CD4-positive, alpha-beta T cell (primary cell): ENCODE measurements at regions of chr5 and their contacts with region 1.

Region 1: DNA sequence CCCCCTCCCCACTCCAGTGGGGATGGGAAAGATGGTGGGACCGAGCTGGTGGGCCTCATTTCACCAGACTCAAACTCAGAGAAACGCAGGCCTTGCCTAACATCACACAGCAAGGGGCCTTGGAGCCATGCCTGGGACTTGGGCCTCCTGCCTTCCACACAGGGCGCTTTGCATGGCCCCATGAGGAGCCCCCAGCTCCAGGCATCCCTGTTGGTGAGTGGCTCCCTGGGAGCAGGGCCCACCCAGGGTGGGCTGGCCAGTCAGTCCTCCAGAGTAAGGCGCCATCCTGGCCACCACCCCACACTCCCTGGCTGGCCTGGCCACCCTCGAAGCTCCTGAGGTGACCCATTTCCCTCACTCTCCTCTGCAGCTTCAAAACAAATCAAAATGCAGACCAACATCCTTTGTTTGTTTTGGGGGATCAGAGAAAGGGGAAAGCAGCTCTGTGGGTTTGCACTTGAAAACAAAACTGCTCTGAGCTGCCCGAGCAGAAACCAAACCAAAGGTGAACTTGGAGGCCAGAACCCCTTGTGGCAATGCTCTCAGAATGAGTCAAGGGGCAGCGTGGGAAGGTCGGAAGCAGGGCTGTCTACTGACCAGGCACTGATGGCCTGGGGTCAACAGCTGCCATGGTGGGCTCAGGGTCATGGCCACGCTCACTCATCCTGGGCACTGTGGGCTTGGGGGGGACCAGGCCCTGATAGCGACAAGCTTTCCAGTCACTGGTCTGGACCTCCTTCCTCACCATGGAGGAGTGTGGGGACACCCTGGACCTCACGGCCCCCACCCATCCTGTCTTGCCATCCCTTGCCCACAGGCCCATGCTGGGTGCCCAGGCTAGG is 37.0 kb upstream of the VDAC1 start:
- DNase-seq: peak in 1 of 14 experiments; percentile 10
- ATAC-seq: no peak
- H3K4me3 ChIP-seq: no peak overlapping the region
- H3K4me3 Mint-ChIP-seq: peak overlapping the region; percentile 30
- H3K27ac ChIP-seq: peak overlapping the region in 1 of 2 donors; percentile 36
- H3K27ac Mint-ChIP-seq: peak overlapping the region; percentile 47
- H3K4me1 ChIP-seq: peaks cover 60% of the 10 kb centered on the region
- H3K4me1 Mint-ChIP-seq: peaks cover 78% of the 10 kb centered on the region
- H3K27me3 ChIP-seq: no peaks in the 10 kb centered on the region
- H3K27me3 Mint-ChIP-seq: no peaks in the 10 kb centered on the region
- CTCF ChIP-seq: no peak

Region 2: DNA sequence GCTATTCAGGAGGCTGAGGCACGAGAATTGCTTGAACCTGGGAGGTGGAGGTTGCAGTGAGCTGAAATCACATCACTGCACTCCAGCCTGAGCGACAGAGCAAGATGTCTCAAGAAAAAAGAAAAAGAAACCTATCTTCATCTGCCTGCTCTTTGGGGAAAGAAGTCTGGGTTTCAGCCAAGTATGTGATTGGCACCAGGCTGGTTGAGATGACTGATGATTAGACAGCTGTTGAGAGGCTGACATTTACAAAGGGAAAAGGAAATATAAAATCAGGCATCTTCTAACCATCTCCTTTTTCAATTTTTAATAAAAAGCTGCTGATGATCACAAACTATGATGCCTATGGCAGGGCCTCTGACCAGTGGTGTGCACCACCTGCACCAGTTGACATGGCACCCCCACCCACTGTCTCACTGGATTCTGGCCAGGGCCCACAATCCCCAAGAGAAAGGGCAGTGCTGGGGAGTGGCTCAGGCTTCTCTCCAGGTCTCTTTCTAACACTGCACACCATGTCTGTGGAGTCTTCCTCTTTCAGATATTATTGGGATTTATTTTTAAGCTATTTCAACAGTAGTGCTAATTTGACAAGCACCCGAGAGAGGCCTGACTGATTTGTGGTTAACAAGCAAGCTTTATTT is 56.1 kb before region 1 on chr5:
- CTCF ChIA-PET with region 1: no interaction called
- POLR2A ChIA-PET with region 1: no interaction called
- intact Hi-C with region 1: no loop called
- DNase-seq: peak in 1 of 14 experiments; percentile 4
- ATAC-seq: no peak
- H3K4me3 ChIP-seq: no peak overlapping the region
- H3K4me3 Mint-ChIP-seq: no peak overlapping the region
- H3K27ac ChIP-seq: no peak overlapping the region
- H3K27ac Mint-ChIP-seq: no peak overlapping the region
- H3K4me1 ChIP-seq: no peaks in the 10 kb centered on the region
- H3K4me1 Mint-ChIP-seq: peaks cover 5% of the 10 kb centered on the region
- H3K27me3 ChIP-seq: no peaks in the 10 kb centered on the region
- H3K27me3 Mint-ChIP-seq: no peaks in the 10 kb centered on the region
- CTCF ChIP-seq: no peak

Region 3: DNA sequence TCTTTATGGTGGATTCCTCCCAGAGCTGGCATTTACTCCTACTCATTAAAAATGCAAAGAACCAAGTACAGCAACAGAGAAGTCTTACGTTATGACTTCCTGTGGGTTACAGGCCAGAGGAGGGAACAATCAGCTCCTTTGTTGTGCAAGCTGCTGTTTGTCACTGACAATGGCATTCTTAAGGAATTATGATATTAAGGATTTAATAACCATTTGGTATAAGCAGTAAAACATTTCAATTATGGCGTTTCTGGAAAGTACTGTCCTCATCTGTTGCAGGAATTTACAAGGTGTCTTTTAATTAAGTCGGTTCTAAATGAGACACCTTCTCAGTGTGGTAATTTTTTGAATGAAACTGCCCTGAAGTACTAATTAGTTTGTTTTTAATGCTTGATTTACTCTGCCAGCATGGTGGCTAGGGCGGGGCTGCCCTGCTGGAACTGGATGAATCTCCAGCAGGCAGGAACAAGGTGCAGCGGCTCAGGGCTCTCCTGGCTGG is 12.1 kb after region 1 on chr5:
- CTCF ChIA-PET with region 1: interaction called, 25 read pairs
- POLR2A ChIA-PET with region 1: interaction called, 10 read pairs
- intact Hi-C with region 1: no loop called
- DNase-seq: peak in 4 of 14 experiments; percentile 45 to 56 (median 48)
- ATAC-seq: peak; percentile 84
- H3K4me3 ChIP-seq: no peak overlapping the region
- H3K4me3 Mint-ChIP-seq: peak overlapping the region; percentile 77
- H3K27ac ChIP-seq: peak overlapping the region; percentile 43 to 52
- H3K27ac Mint-ChIP-seq: peak overlapping the region; percentile 86
- H3K4me1 ChIP-seq: peaks cover 45% of the 10 kb centered on the region
- H3K4me1 Mint-ChIP-seq: peaks cover 55% of the 10 kb centered on the region
- H3K27me3 ChIP-seq: no peaks in the 10 kb centered on the region
- H3K27me3 Mint-ChIP-seq: no peaks in the 10 kb centered on the region
- CTCF ChIP-seq: no peak

Region 4: DNA sequence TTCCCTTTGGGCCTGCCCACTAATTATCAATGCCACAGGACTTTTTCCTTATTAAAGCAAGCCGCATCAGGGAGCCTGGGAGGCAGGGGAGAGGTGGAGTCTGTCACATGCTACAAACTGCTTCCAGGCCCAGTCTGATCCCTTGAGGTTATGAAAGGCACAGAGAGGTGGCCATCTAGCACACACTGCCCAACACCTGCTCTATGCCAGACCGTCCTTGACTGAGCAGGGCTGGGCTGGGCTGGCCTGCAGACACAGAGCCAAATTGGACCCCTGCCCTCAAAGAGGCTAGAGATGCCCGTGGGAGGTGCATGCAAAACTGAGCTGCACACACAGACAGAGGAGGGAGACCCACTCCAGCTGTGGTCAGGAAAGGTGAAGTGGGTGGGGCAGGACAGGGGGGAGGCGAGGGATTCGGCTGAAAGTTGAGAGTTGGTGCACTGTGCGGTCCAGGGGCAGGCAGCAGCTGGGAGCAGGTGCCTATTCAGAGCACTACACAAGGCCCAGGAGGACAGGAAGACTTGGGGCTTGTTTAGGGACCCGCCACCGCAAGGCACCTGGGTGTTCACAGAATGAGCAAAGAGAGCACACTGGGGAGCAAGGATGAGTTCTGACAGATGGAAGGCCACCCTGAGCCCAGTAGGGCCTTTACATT is 36.3 kb after region 1 on chr5:
- CTCF ChIA-PET with region 1: interaction called, 27 read pairs
- POLR2A ChIA-PET with region 1: interaction called, 9 read pairs
- intact Hi-C with region 1: loop called in 1 of 2 experiments (anchors 5 kb)
- DNase-seq: peak in 5 of 14 experiments; percentile 33 to 65 (median 50)
- ATAC-seq: peak; percentile 55
- H3K4me3 ChIP-seq: no peak overlapping the region
- H3K4me3 Mint-ChIP-seq: peak overlapping the region; percentile 70
- H3K27ac ChIP-seq: peak overlapping the region in 1 of 2 donors; percentile 32
- H3K27ac Mint-ChIP-seq: peak overlapping the region; percentile 95
- H3K4me1 ChIP-seq: peaks cover 66% of the 10 kb centered on the region
- H3K4me1 Mint-ChIP-seq: peaks cover 77% of the 10 kb centered on the region
- H3K27me3 ChIP-seq: no peaks in the 10 kb centered on the region
- H3K27me3 Mint-ChIP-seq: no peaks in the 10 kb centered on the region
- CTCF ChIP-seq: no peak

Region 5: DNA sequence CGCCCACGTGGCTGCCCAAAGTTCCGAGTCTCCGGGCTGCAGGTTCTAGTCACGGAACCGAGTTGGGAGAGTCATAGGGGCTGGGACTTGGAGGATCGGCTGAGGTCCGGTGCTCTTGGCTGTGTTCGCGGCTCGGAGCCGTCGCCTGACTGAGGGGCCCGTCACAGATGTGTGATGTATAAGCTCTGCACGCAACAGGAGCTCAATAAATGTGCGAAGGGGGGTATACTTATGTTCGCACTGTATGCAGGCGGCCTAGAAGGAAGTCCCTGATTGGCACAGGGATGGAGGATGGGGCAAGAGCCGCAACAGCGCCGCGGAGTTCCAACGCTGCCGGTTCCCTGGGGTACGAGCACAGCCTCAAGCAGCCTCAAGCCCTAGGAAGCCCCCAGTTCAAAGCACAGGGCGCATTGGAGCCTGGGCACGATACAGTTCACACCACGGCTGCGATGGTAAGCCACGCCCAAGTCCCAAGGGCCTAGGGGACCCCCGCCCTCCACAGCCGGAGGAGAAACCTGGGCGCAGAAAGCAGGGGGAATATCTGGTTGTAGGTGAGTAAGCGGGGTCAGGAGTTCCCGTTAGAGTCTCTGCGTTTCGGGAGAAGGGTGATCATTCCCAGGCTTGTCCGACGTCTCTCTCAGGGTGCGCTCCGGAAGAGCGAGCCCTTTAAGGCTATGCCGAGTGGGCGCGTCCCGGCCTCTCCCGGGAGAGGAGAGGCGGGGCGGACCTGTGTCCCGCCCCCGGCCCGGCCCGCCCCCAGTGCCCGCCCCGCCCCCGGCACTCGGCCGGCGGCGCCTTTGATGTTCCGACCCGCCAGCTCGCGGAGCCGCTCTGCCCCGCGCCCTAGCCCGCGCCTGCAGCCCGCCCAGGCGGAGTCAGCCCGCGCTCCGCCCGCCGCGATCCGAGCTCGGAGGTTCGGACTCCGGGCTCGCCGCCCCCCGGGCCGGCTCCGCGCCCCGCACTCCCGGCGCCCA is 72.4 kb after region 1 on chr5 and contains the start of gene TCF7:
- CTCF ChIA-PET with region 1: interaction called, 66 read pairs
- POLR2A ChIA-PET with region 1: interaction called, 138 read pairs
- intact Hi-C with region 1: loop called in 1 of 2 experiments (anchors 2 kb)
- DNase-seq: peak; percentile 64 to 92 (median 82)
- ATAC-seq: peak; percentile 67
- H3K4me3 ChIP-seq: peak within 1 kb of the TSS; percentile 97
- H3K4me3 Mint-ChIP-seq: peak within 1 kb of the TSS; percentile 98
- H3K27ac ChIP-seq: peak within 1 kb of the TSS; percentile 80 to 96
- H3K27ac Mint-ChIP-seq: peak within 1 kb of the TSS; percentile 98
- H3K4me1 ChIP-seq: peaks cover 73% of the 10 kb centered on the region
- H3K4me1 Mint-ChIP-seq: peaks cover 56% of the 10 kb centered on the region
- H3K27me3 ChIP-seq: no peaks in the 10 kb centered on the region
- H3K27me3 Mint-ChIP-seq: no peaks in the 10 kb centered on the region
- CTCF ChIP-seq: no peak
- total RNA-seq, gene TCF7: 480 to 493 TPM

Region 6: GRCh38 chr5:134132372-134133034 is 90.7 kb after region 1 on chr5:
- CTCF ChIA-PET with region 1: interaction called, 21 read pairs
- POLR2A ChIA-PET with region 1: interaction called, 350 read pairs
- intact Hi-C with region 1: no loop called
- DNase-seq: peak; percentile 68 to 97 (median 78)
- ATAC-seq: peak; percentile 74
- H3K4me3 ChIP-seq: peak overlapping the region; percentile 92
- H3K4me3 Mint-ChIP-seq: peak overlapping the region; percentile 95
- H3K27ac ChIP-seq: peak overlapping the region; percentile 83 to 96
- H3K27ac Mint-ChIP-seq: peak overlapping the region; percentile 98
- H3K4me1 ChIP-seq: peaks cover 100% of the 10 kb centered on the region
- H3K4me1 Mint-ChIP-seq: peaks cover 100% of the 10 kb centered on the region
- H3K27me3 ChIP-seq: no peaks in the 10 kb centered on the region
- H3K27me3 Mint-ChIP-seq: no peaks in the 10 kb centered on the region
- CTCF ChIP-seq: peak; percentile 30

Region 7: DNA sequence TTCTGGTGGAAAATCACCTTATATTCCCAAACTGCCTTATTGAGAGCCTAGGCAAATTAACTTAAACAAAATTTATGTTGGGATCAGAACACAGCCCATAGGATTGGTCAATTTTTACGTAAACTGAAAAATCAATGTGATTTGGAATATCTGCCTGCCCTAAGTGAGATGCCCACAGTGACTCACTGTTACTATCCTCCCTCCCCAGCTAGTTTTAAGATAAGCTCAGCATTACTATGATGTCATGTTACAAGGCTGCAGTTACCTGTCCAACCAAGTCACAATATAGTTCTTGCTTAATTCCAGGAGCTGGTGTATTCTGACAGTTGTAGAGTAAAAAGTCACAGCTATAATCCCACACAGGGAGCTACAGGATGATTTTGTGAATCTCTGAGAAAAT is 111.9 kb after region 1 on chr5:
- CTCF ChIA-PET with region 1: interaction called, 27 read pairs
- POLR2A ChIA-PET with region 1: interaction called, 350 read pairs
- intact Hi-C with region 1: no loop called
- DNase-seq: no peak
- ATAC-seq: no peak
- H3K4me3 ChIP-seq: no peak overlapping the region
- H3K4me3 Mint-ChIP-seq: no peak overlapping the region
- H3K27ac ChIP-seq: no peak overlapping the region
- H3K27ac Mint-ChIP-seq: peak overlapping the region; percentile 89
- H3K4me1 ChIP-seq: peaks cover 37% of the 10 kb centered on the region
- H3K4me1 Mint-ChIP-seq: peaks cover 92% of the 10 kb centered on the region
- H3K27me3 ChIP-seq: no peaks in the 10 kb centered on the region
- H3K27me3 Mint-ChIP-seq: no peaks in the 10 kb centered on the region
- CTCF ChIP-seq: no peak